AG04450 (cell line): ENCODE measurements at regions of chr11 and their contacts with region 1.

Region 1: DNA sequence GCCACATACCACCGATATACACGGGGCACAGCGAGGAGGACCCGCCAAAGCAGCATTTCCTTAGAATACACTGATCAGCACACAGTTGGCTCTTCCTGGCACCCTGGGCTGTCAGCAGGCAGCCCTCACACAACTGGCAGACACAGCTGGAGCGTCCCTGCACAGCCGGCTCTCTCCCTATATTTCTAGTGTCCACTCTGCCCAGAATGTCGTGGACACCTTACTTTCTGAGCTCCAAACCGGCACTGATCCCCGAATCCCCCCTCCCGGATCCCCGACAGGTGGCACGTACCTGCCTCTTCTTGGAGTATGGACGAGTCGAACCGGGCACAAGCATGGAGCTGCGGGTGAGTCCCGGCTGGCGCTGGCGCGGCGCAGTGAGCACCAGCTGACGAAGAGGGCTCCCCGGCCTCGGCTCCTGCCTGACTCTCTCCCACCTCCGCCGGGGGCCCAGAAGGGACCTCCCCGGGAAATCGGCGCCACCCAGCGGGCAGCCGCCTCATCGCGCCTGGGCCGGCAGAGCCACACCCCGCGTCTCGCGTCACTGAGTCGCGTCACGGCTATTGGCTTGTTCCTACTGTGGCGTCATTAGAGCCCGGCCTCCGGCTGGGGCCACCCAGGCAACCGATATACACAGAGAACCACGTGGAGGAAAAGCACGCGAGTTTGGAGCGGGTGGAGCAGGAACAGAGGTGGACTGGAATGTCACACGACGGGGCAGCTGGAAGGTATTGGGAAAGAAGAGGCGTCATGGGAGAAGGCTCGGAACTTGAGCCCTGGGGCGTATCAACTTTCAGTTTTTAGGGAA is at the start of gene USP2:
- DNase-seq: peak; percentile 88
- H3K4me3 ChIP-seq: peak within 1 kb of the TSS; percentile 68
- H3K27ac ChIP-seq: peak within 1 kb of the TSS; percentile 21
- H3K27me3 ChIP-seq: peaks cover 17% of the 10 kb centered on the region
- CTCF ChIP-seq: peak; percentile 78
- polyA plus RNA-seq, gene USP2: 0.32 and 0.46 TPM in 2 replicates

Region 2: GRCh38 chr11:119115484-119116234 is 265.7 kb before region 1 on chr11:
- CTCF ChIA-PET with region 1: no interaction called
- POLR2A ChIA-PET with region 1: no interaction called
- DNase-seq: no peak
- H3K4me3 ChIP-seq: no peak overlapping the region
- H3K27ac ChIP-seq: no peak overlapping the region
- H3K27me3 ChIP-seq: no peaks in the 10 kb centered on the region
- CTCF ChIP-seq: no peak

Region 3: GRCh38 chr11:119403021-119403420 is 21.6 kb after region 1 on chr11:
- CTCF ChIA-PET with region 1: interaction called, 13 read pairs
- POLR2A ChIA-PET with region 1: no interaction called
- DNase-seq: no peak
- H3K4me3 ChIP-seq: no peak overlapping the region
- H3K27ac ChIP-seq: no peak overlapping the region
- H3K27me3 ChIP-seq: no peaks in the 10 kb centered on the region
- CTCF ChIP-seq: no peak

Region 4: DNA sequence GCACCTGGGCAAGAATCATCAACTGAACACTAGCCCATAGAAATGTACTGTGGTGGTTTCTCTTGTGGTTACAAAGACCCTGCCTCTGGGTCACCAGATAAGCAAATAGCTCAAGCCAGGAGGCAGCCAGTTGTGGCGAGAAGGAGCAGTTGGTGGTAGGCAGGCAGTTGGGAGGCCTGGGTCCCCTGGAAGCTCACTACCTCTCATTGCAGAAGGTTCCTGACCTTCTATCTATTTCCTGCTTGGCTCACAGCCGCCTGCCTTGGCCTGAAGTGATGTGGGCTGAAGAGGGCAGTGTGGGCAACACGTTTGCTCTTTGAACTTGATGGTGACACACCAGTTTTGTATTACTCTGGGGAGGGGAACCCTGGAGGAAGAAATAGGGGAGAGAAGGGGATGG is 312.9 kb after region 1 on chr11:
- CTCF ChIA-PET with region 1: no interaction called
- POLR2A ChIA-PET with region 1: no interaction called
- DNase-seq: no peak
- H3K4me3 ChIP-seq: no peak overlapping the region
- H3K27ac ChIP-seq: no peak overlapping the region
- H3K27me3 ChIP-seq: no peaks in the 10 kb centered on the region
- CTCF ChIP-seq: no peak